ENCODE measurements at regions of chr5 and their contacts with region 1.

Region 1: GRCh38 chr5:127572930-127573329 is 55.5 kb downstream of the PRRC1 start:
- DNase-seq: no peak
- H3K4me3 ChIP-seq: no peak overlapping the region
- H3K27ac ChIP-seq: no peak overlapping the region
- H3K4me1 ChIP-seq: no peaks in the 10 kb centered on the region
- H3K27me3 ChIP-seq: no peaks in the 10 kb centered on the region
- CTCF ChIP-seq: no peak
- EP300 ChIP-seq: no peak
- POLR2A ChIP-seq: no peak

Region 2: GRCh38 chr5:128083033-128083810 is 510.3 kb after region 1 on chr5 and contains the start of gene SLC12A2:
- intact Hi-C with region 1: loop called in 1 of 4 experiments (anchors 5 kb)
- DNase-seq: peak; percentile 92 to 95 (median 93)
- H3K4me3 ChIP-seq: peak within 1 kb of the TSS; percentile 87
- H3K27ac ChIP-seq: peak within 1 kb of the TSS; percentile 86 to 99
- H3K4me1 ChIP-seq: peaks cover 4% of the 10 kb centered on the region
- H3K27me3 ChIP-seq: no peaks in the 10 kb centered on the region
- CTCF ChIP-seq: peak in 1 of 3 donors; percentile 6
- EP300 ChIP-seq: no peak
- POLR2A ChIP-seq: peak; percentile 57
- total RNA-seq, gene SLC12A2: 15.6 to 31.6 (median 20.8) TPM

Measured in ovary (tissue), 10 donors.